ENCODE measurements at regions of chr9 and their contacts with region 1.

Region 1: GRCh38 chr9:114738581-114739316 is 56.8 kb upstream of the TEX48 start:
- DNase-seq: no peak
- H3K4me3 ChIP-seq: no peak overlapping the region
- H3K27ac ChIP-seq: no peak overlapping the region
- H3K4me1 ChIP-seq: no peaks in the 10 kb centered on the region
- H3K27me3 ChIP-seq: no peaks in the 10 kb centered on the region
- CTCF ChIP-seq: peak; percentile 65 to 94 (median 78)
- POLR2A ChIP-seq: no peak

Region 2: GRCh38 chr9:113484258-113484730 is 1254.5 kb before region 1 on chr9:
- intact Hi-C with region 1: loop called (anchors 5 kb)
- DNase-seq: no peak
- H3K4me3 ChIP-seq: no peak overlapping the region
- H3K27ac ChIP-seq: peak overlapping the region; percentile 68
- H3K4me1 ChIP-seq: peaks cover 9% of the 10 kb centered on the region
- H3K27me3 ChIP-seq: no peaks in the 10 kb centered on the region
- CTCF ChIP-seq: no peak
- POLR2A ChIP-seq: no peak

Region 3: DNA sequence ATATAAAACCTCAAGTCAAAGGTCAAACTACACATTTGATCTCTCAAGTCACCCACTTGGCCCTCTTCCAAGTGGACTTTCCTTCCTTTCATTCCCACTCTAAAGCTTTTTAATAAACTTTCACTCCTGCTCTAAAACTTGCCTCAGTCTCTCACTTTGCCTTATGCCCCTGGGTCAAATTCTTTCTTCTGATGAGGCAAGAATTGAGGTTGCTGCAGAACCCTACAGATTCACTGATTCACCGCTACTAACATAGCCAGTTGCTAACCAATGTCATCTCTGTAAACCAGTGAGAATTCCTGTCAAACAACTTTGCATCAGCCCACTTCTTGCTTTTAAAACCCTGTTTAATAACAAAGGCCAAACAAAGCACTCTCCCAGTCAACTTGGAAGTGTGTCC is 158.1 kb before region 1 on chr9:
- intact Hi-C with region 1: no loop called
- DNase-seq: no peak
- H3K4me3 ChIP-seq: no peak overlapping the region
- H3K27ac ChIP-seq: no peak overlapping the region
- H3K4me1 ChIP-seq: no peaks in the 10 kb centered on the region
- H3K27me3 ChIP-seq: no peaks in the 10 kb centered on the region
- CTCF ChIP-seq: no peak
- POLR2A ChIP-seq: no peak

Region 4: DNA sequence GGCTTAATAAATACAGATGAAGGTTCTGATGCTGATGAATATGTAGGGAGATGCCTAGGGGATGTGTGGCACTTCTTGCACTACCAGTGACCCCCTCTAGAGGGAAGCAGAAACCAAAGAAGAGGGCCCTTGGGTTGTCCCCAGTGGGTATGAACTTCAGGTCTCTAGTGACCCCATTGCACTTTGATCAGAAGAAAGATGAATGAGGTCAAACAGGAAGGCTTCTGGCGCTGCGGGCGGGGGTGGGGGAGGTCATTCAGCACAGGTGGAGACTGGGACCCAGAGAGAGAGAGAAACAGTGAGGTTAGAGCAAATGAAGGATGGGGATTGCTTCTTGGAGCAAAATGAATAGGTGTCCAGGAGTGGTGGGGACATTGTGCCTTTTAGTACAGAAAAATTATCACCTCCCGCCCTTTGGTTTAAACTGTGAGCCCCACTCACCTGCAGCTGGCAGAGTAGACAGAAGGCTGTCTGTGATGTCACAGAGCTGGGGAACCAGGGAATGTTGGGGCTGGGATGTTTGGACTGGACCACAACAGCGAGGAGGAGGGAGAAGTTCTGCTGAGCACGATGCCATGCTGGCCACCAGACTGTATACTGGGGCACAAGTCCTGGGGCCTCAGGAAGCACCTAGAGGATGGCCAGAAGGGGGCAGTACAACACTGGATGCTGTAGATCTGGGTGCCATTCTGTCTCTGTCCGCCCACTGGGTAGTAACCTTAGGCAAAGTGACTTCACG is 57.0 kb before region 1 on chr9 and contains the start of gene TEX48:
- intact Hi-C with region 1: no loop called
- DNase-seq: no peak
- H3K4me3 ChIP-seq: no peak within 1 kb of the TSS
- H3K27ac ChIP-seq: no peak within 1 kb of the TSS
- H3K4me1 ChIP-seq: no peaks in the 10 kb centered on the region
- H3K27me3 ChIP-seq: no peaks in the 10 kb centered on the region
- CTCF ChIP-seq: peak; percentile 39 to 63 (median 43)
- POLR2A ChIP-seq: no peak
- total RNA-seq, gene TEX48: not detected

Region 5: DNA sequence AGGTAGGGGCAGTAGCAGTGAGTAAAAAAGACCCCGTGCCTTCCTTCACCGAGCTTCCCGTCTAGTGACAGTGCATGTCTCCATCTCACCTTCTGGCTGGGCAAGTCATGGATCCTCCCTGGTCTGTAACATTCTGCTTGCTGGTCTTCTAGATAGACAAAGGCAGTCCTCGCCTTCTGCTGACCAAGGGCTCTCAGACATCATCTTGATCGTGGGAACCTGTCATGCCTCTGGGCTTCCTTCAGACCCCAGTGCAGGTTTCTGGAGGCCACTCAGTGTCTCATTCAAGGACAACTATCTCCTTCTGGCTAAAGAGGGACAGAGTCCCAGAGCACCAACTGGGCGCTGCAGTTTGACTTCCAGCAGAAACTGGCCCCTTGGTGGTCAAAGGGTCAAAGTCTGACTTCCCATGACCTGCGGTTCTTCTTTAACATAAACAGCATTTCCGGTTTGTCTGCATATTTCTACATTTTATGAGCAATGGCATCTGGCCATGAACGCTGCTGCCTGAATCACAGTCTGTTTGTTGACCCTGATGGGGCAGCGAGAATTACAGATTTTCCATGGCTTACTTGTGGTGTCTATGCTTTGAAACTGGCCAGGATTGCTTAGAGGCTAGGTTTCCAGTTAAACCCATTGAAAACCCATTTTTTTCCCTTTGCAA is 65.6 kb after region 1 on chr9:
- intact Hi-C with region 1: no loop called
- DNase-seq: no peak
- H3K4me3 ChIP-seq: no peak overlapping the region
- H3K27ac ChIP-seq: no peak overlapping the region
- H3K4me1 ChIP-seq: peaks cover 35% of the 10 kb centered on the region
- H3K27me3 ChIP-seq: no peaks in the 10 kb centered on the region
- CTCF ChIP-seq: no peak
- POLR2A ChIP-seq: no peak

Region 6: DNA sequence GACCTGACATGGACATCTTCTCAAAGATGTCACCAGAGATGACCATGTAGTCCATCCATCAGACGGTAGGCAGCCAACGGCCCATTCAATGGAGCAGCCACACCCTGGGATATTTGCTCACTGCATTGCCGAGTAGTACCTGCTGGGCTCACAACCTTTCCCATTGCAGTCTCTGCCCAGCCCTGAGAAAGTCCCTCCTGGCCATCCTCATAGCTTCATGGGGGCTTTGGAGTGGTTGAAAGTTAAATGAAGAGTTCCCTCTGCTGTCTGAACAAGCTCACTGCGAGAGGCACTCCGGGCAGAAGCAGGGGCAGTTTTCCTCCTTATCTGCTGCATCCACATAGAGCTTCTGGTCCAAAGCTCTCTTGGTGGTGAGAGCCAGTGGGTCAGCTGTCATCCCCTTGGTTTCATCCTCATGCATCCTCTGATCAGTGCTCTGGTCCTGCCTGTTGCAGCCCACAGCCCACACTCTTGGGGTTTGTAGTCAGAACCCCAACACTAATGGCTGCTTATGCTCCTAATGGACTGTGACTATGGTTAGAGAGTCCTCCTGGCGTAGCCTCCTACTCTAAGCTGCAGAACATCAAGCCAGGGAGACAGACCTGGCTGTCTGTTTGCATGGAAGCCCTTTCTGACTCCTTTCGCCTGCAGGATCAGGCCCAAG is 168.3 kb after region 1 on chr9:
- intact Hi-C with region 1: loop called (anchors 5 kb)
- DNase-seq: no peak
- H3K4me3 ChIP-seq: no peak overlapping the region
- H3K27ac ChIP-seq: no peak overlapping the region
- H3K4me1 ChIP-seq: no peaks in the 10 kb centered on the region
- H3K27me3 ChIP-seq: no peaks in the 10 kb centered on the region
- CTCF ChIP-seq: peak in 2 of 3 experiments; percentile 34 to 49
- POLR2A ChIP-seq: no peak